ENCODE measurements at regions of chr1 and their contacts with region 1.

Region 1: DNA sequence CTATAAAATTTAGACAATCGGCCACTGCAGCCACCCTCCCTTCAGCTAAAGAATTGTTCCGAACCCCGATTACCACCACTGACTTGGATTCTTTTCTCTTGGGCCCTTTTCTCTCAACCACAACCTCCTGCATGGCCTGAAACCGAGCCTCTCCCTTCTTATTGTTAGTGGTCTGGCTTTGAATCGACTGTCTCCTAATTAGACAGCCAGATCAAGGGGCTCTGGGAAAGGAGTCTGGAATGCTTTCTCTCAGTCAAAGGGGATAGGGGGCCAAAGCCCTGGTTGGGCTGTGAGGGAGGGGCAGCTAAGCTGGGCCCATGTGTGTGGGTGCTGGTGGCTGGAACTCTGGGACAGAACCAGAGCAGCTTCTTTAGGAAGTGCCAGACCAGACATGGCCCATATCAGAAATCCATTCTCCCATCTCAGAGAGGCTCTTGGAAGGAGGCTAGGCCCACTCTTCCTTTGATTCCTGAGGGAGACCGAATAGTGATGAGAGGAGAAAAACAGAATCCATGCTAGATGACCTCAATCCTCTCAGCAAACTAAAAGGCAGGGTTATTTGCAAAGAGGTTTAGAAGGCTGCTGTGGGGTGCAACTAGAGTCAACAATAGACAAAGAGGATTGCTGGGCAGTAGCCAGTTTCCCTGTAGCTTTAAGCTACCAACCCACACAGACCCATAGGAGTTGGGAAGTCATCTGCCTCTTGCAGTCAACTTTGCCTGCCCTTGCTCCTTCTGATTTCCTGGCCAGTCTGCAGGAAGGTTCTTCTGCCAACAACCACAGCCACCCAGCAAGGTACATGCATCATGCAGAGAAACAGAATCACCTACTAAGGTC is 117.6 kb downstream of the AK5 start:
- DNase-seq: no peak
- ATAC-seq: no peak
- H3K4me3 ChIP-seq: no peak overlapping the region
- H3K27ac ChIP-seq: no peak overlapping the region
- H3K4me1 ChIP-seq: no peaks in the 10 kb centered on the region
- H3K27me3 ChIP-seq: no peaks in the 10 kb centered on the region
- CTCF ChIP-seq: no peak

Region 2: GRCh38 chr1:77413541-77414335 is 14.3 kb after region 1 on chr1:
- intact Hi-C with region 1: loop called in 1 of 10 experiments (anchors 2 kb)
- DNase-seq: no peak
- ATAC-seq: peak in 1 of 8 donors; percentile 29
- H3K4me3 ChIP-seq: no peak overlapping the region
- H3K27ac ChIP-seq: no peak overlapping the region
- H3K4me1 ChIP-seq: peaks cover 0 to 43% (median 0%) of the 10 kb centered on the region in 9 donors
- H3K27me3 ChIP-seq: peaks cover 0 to 40% (median 0%) of the 10 kb centered on the region in 7 donors
- CTCF ChIP-seq: no peak

Region 3: DNA sequence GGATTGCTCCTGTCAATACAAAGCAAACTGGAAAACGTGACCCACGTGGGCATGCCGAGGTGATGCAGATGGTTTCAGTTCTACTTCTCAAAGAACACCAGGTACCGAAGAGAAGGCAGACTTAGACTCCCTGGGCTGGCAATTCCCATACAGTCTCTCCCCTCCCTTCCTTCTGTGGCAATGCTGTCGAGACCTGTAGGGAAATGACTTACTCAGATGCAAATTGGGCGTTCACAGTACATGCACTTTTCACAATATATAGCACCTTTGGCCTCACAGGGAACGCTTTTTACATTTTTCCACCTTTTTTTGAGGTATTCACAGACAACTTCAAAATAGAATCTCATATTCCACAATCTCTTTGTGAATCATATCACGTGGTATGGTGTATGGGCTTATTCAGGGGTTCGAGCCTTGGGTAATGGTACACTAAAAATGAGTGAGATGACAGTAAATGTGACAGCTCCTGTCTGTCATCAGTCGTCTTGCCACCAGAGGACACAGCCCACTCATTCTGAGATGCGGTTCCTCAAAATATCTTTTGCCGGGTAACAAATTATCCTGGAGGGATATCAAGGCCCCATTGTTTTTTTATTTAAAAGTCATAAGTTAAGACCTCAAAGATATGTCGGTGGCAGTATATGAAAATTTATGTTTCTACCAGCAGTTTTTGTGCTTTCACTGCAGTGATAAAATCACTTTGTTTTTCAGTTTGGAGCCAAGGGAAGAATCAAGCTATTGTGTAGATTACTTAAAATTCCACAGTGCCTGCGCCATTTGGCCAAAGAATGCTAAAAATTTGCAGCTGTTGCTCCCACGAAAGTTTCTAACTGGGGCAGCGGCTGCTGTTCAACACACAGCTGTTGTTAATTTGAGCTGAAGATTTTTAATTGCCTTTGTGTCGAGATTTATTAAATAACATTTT is 114.6 kb after region 1 on chr1:
- intact Hi-C with region 1: no loop called
- DNase-seq: no peak
- ATAC-seq: peak in 5 of 8 donors; percentile 52 to 64 (median 57)
- H3K4me3 ChIP-seq: no peak overlapping the region
- H3K27ac ChIP-seq: peak overlapping the region in 6 of 10 donors; percentile 45 to 69 (median 50)
- H3K4me1 ChIP-seq: peaks cover 0 to 16% (median 10%) of the 10 kb centered on the region in 9 donors
- H3K27me3 ChIP-seq: no peaks in the 10 kb centered on the region
- CTCF ChIP-seq: no peak